ENCODE measurements at regions of chr3 and their contacts with region 1.

Region 1: GRCh38 chr3:132047209-132047608 is 12.4 kb upstream of the CPNE4 start:
- DNase-seq: no peak
- ATAC-seq: no peak
- H3K4me3 Mint-ChIP-seq: no peak overlapping the region
- H3K27ac Mint-ChIP-seq: no peak overlapping the region
- H3K4me1 Mint-ChIP-seq: no peaks in the 10 kb centered on the region
- H3K27me3 Mint-ChIP-seq: no peaks in the 10 kb centered on the region
- CTCF ChIP-seq: no peak

Region 2: GRCh38 chr3:132174500-132174899 is 127.3 kb after region 1 on chr3:
- CTCF ChIA-PET with region 1: no interaction called
- POLR2A ChIA-PET with region 1: no interaction called
- intact Hi-C with region 1: loop called (anchors 10 kb)
- DNase-seq: no peak
- ATAC-seq: no peak
- H3K4me3 Mint-ChIP-seq: no peak overlapping the region
- H3K27ac Mint-ChIP-seq: no peak overlapping the region
- H3K4me1 Mint-ChIP-seq: no peaks in the 10 kb centered on the region
- H3K27me3 Mint-ChIP-seq: peaks cover 5% of the 10 kb centered on the region
- CTCF ChIP-seq: no peak

Measured in activated CD8-positive, alpha-beta T cell treated with anti-CD3 and anti-CD28 coated beads for 36 hours (primary cell).